ENCODE measurements at regions of chr22 and their contacts with region 1.

Region 1: GRCh38 chr22:29306175-29306834 is at the start of gene GAS2L1:
- DNase-seq: peak; percentile 86 to 93
- ATAC-seq: peak; percentile 73 to 81 (median 74)
- H3K4me3 ChIP-seq: peak within 1 kb of the TSS; percentile 92
- H3K27ac ChIP-seq: peak within 1 kb of the TSS; percentile 81
- H3K4me1 ChIP-seq: peaks cover 27% of the 10 kb centered on the region
- H3K27me3 ChIP-seq: no peaks in the 10 kb centered on the region
- CTCF ChIP-seq: peak; percentile 78
- total RNA-seq, gene GAS2L1: 4.6 to 7.1 (median 5.7) TPM

Region 2: GRCh38 chr22:29016067-29016938 is 290.0 kb before region 1 on chr22:
- intact Hi-C with region 1: no loop called
- DNase-seq: no peak
- ATAC-seq: no peak
- H3K4me3 ChIP-seq: no peak overlapping the region
- H3K27ac ChIP-seq: no peak overlapping the region
- H3K4me1 ChIP-seq: peaks cover 30% of the 10 kb centered on the region
- H3K27me3 ChIP-seq: no peaks in the 10 kb centered on the region
- CTCF ChIP-seq: no peak

Region 3: GRCh38 chr22:29267858-29268417 is 38.4 kb before region 1 on chr22 and contains the starts of genes EWSR1 and RHBDD3:
- intact Hi-C with region 1: loop called in 1 of 2 experiments (anchors 5 kb)
- DNase-seq: peak; percentile 98 to 99
- ATAC-seq: peak; percentile 89 to 94 (median 92)
- H3K4me3 ChIP-seq: peak within 1 kb of the TSS; percentile 94
- H3K27ac ChIP-seq: peak within 1 kb of the TSS; percentile 100
- H3K4me1 ChIP-seq: peaks cover 57% of the 10 kb centered on the region
- H3K27me3 ChIP-seq: no peaks in the 10 kb centered on the region
- CTCF ChIP-seq: no peak
- total RNA-seq, gene EWSR1: 78.5 to 230 (median 156) TPM
- total RNA-seq, gene RHBDD3: 10.6 to 26.7 (median 16.2) TPM

Region 4: DNA sequence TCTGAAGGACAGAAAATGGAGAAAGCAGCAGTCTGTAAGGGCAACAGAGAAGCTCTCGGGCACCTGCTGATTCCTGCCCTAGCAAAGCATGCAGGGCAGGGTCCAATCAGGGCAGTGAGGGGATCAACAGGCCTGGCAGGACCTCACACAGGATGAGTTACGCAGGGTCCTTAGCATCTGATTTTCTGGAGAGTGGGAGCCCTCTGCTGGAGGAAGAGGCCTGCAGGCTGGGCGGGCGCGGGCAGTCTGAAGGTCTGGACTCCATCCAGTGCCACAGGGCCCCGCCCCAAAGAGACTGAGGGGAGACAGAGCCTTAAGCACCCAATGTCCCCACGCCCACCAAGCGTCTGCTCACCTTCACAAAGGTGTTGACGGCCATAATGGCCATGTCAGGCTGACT is 53.2 kb after region 1 on chr22:
- intact Hi-C with region 1: loop called (anchors 1 to 2 kb)
- DNase-seq: peak; percentile 66 to 85
- ATAC-seq: peak; percentile 89 to 95 (median 93)
- H3K4me3 ChIP-seq: no peak overlapping the region
- H3K27ac ChIP-seq: peak overlapping the region; percentile 47
- H3K4me1 ChIP-seq: peaks cover 8% of the 10 kb centered on the region
- H3K27me3 ChIP-seq: no peaks in the 10 kb centered on the region
- CTCF ChIP-seq: peak; percentile 74

Region 5: DNA sequence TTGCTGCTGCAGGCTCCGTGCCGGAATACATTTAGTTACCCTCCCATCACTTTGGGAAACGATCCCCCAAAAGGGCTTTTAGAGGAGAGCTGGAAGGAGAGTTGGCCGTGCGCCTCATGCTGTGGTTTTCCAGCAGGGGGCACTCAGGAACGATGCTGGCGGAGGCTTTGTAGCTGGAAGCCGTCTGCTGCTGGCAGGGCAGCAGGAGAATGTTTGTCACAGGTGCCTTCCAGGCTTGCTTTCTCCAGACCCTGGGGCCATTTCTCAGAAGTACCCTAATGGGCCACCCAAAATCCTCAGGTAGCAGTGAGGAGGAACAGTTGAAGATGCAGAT is 383.5 kb after region 1 on chr22:
- intact Hi-C with region 1: no loop called
- DNase-seq: peak; percentile 67 to 82
- ATAC-seq: peak; percentile 77 to 90 (median 86)
- H3K4me3 ChIP-seq: no peak overlapping the region
- H3K27ac ChIP-seq: no peak overlapping the region
- H3K4me1 ChIP-seq: peaks cover 9% of the 10 kb centered on the region
- H3K27me3 ChIP-seq: no peaks in the 10 kb centered on the region
- CTCF ChIP-seq: peak; percentile 79

Region 6: GRCh38 chr22:30435674-30436126 is 1129.4 kb after region 1 on chr22:
- intact Hi-C with region 1: no loop called
- DNase-seq: peak in 1 of 2 donors; percentile 64
- ATAC-seq: no peak
- H3K4me3 ChIP-seq: no peak overlapping the region
- H3K27ac ChIP-seq: peak overlapping the region; percentile 37
- H3K4me1 ChIP-seq: no peaks in the 10 kb centered on the region
- H3K27me3 ChIP-seq: peaks cover 0 to 5% (median 0%) of the 10 kb centered on the region in 3 donors
- CTCF ChIP-seq: no peak